Naive thymus-derived CD4-positive, alpha-beta T cell (primary cell): ENCODE measurements at regions of chr7 and their contacts with region 1.

Region 1: DNA sequence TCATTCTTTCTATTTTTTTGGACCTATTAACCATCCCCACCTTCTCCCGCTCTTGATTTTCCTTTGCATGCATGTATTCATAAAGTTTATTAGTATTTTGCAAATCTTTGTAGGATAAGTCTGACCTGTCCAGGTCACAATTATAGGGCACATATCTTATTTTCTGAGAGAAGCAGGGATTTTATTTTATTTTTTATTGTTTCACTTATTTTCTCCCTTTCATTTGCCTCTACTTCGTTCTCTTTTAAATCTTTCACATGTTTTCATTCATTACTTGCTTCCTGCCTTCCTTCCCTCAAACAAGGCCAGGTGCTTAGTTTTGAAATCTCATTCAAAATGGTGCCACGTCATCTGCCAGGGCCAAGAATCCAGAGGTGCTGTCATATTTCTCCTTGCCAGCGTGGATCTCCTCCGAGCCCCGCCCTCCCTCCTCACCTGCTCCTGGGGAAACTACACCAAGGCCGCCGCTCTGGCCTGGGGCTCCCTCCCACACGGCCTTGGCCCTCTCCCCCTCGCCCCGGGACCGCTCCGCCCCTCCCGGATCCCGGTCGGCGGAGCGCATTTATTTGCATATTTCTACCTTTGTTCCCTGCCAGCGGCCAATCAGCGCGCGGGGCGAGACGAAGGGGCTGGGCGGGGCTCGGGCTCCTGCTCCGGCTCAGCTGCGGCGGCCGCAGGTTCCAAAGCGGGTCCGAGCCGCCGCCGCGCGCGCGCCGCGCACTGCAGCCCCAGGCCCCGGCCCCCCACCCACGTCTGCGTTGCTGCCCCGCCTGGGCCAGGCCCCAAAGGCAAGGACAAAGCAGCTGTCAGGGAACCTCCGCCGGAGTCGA is at the start of gene TSPAN13:
- DNase-seq: peak in 7 of 9 donors; percentile 2 to 69 (median 18)
- ATAC-seq: peak; percentile 83
- H3K4me3 ChIP-seq: peak within 1 kb of the TSS; percentile 43
- H3K4me3 Mint-ChIP-seq: peak within 1 kb of the TSS; percentile 70 to 91 (median 82)
- H3K27ac ChIP-seq: no peak within 1 kb of the TSS
- H3K27ac Mint-ChIP-seq: peak within 1 kb of the TSS in 1 of 9 donors; percentile 90
- H3K4me1 ChIP-seq: peaks cover 0 to 5% of the 10 kb centered on the region in 2 donors
- H3K4me1 Mint-ChIP-seq: peaks cover 9 to 15% (median 11%) of the 10 kb centered on the region in 7 donors
- H3K27me3 ChIP-seq: peaks cover 3 to 8% of the 10 kb centered on the region in 2 donors
- H3K27me3 Mint-ChIP-seq: peaks cover 31 to 60% (median 44%) of the 10 kb centered on the region in 5 donors
- total RNA-seq, gene TSPAN13: 0.31 to 2.5 (median 0.74) TPM in 3 of 5 experiments, not detected in the others

Region 2: GRCh38 chr7:16420649-16421332 is 332.5 kb before region 1 on chr7:
- CTCF ChIA-PET with region 1: no interaction called
- POLR2A ChIA-PET with region 1: no interaction called
- intact Hi-C with region 1: loop called in 1 of 2 experiments (anchors 2 kb)
- DNase-seq: peak; percentile 71 to 93 (median 88)
- ATAC-seq: peak; percentile 93
- H3K4me3 ChIP-seq: peak overlapping the region; percentile 93
- H3K4me3 Mint-ChIP-seq: peak overlapping the region; percentile 82 to 96 (median 88)
- H3K27ac ChIP-seq: peak overlapping the region; percentile 78
- H3K27ac Mint-ChIP-seq: peak overlapping the region; percentile 84 to 98 (median 92)
- H3K4me1 ChIP-seq: peaks cover 6 to 9% of the 10 kb centered on the region in 2 donors
- H3K4me1 Mint-ChIP-seq: peaks cover 7 to 23% (median 15%) of the 10 kb centered on the region in 7 donors
- H3K27me3 ChIP-seq: no peaks in the 10 kb centered on the region
- H3K27me3 Mint-ChIP-seq: peaks cover 0 to 14% (median 0%) of the 10 kb centered on the region in 5 donors

Region 3: DNA sequence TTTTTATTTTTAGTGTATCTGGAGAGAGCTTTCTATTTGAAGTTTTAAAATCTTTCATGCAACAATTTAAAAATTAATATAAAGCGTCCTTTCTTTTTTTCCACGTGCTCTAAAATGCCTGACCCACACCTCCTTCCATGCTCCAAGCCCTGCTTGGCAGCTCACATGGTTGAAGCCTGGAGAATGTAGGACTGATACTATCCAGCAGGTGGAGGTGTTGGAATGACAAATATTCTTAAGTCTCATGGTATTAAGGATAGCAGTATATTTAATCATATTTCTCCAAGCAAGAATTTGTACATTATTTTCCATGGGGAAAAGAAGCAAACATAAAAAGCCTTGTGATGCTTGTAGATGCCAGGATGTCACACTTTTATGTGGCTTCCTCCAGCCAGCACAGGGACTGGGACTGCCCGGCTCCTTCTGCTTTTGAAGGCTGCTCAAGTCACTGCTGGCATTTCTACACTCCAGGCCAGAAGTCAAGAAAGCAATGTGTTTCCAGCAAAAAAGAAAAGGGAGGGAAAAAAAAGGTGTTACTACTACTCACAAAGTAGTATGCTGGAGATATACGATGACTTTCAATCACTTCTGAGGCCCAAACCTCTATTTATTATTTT is 57.6 kb before region 1 on chr7:
- CTCF ChIA-PET with region 1: no interaction called
- POLR2A ChIA-PET with region 1: no interaction called
- intact Hi-C with region 1: loop called in 1 of 2 experiments (anchors 5 kb)
- DNase-seq: no peak
- ATAC-seq: no peak
- H3K4me3 ChIP-seq: no peak overlapping the region
- H3K4me3 Mint-ChIP-seq: no peak overlapping the region
- H3K27ac ChIP-seq: no peak overlapping the region
- H3K27ac Mint-ChIP-seq: peak overlapping the region in 1 of 9 donors; percentile 51
- H3K4me1 ChIP-seq: no peaks in the 10 kb centered on the region
- H3K4me1 Mint-ChIP-seq: peaks cover 0 to 2% (median 0%) of the 10 kb centered on the region in 7 donors
- H3K27me3 ChIP-seq: no peaks in the 10 kb centered on the region
- H3K27me3 Mint-ChIP-seq: no peaks in the 10 kb centered on the region

Region 4: DNA sequence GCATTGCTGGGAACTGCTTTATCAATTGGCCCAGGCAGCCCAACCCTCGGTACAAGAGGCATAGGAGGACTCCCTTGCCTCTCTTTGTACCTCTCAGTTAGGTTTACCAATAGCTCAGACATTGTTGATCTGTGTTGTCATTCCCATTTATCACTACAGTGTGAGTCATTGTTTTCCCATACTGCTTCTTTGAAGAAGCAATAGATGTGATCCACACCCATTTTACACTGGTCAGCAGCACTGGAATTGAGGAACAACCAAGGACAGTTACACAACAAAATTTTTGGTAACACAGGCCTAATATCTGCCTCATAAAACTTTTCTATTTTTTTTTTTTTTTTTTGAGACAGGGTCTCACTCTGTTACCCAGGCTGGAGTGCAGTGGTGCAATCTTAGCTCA is 879.8 kb after region 1 on chr7:
- CTCF ChIA-PET with region 1: no interaction called
- POLR2A ChIA-PET with region 1: no interaction called
- intact Hi-C with region 1: no loop called
- DNase-seq: no peak
- ATAC-seq: peak; percentile 75
- H3K4me3 ChIP-seq: no peak overlapping the region
- H3K4me3 Mint-ChIP-seq: no peak overlapping the region
- H3K27ac ChIP-seq: no peak overlapping the region
- H3K27ac Mint-ChIP-seq: no peak overlapping the region
- H3K4me1 ChIP-seq: no peaks in the 10 kb centered on the region
- H3K4me1 Mint-ChIP-seq: no peaks in the 10 kb centered on the region
- H3K27me3 ChIP-seq: no peaks in the 10 kb centered on the region
- H3K27me3 Mint-ChIP-seq: peaks cover 0 to 19% (median 8%) of the 10 kb centered on the region in 5 donors